Head of caudate nucleus (tissue), 42 donors: ENCODE measurements at regions of chr5 and their contacts with region 1.

Region 1: DNA sequence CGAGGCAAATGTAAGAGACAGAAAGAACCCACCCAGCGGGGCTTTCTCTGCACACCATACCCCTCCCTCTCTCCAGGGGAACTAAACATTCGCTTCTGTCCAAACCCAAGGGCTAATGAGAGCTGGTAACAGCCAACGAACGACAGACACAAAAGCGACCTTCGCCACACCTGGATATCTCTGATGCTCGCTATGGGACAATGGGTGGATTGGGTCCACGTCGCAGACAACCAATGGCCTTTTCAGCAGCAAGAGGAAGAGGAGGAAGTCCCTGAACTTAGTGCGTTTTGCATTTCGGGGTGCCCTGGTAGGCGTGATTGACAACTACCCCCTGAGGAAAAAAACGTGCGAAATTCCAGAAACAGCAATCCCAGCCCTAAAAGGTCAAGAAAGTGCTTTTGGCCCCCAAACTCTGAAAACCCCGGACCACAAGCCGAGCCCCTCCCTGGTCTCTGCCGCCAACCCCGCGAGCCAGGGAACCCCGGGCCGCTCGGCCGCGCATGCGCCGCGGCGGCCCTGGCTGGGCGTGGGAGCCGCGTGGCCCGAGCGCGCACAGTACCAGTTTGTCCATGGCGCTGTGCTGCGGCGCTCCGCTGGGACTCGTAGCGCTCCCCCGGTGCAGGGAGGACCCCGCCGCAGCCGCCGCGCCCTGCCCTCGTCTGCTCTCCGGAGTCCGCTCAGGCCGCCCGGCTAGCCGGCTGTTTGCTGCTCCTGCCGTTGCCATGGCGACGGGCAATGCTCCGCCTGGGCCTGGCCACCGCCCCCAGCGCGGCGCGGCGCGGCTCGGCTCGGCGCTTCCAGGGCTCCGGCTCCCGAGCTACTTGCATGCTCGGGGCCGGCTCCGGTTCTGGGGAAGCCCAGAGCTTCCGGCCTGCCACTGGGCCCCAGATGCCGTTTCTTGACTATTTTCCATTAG is 66.9 kb upstream of the DNAH5 start:
- DNase-seq: peak; percentile 48 to 91 (median 82)

Region 2: GRCh38 chr5:14264604-14265316 is 253.4 kb after region 1 on chr5:
- intact Hi-C with region 1: loop called (anchors 10 kb)
- DNase-seq: peak; percentile 82 to 96 (median 92)